Mammary epithelial cell (primary cell): ENCODE measurements at regions of chr3 and their contacts with region 1.

Region 1: GRCh38 chr3:135304378-135304777 is 509.3 kb downstream of the EPHB1 start:
- DNase-seq: no peak
- H3K4me3 ChIP-seq: no peak overlapping the region
- H3K27ac ChIP-seq: no peak overlapping the region
- H3K4me1 ChIP-seq: no peaks in the 10 kb centered on the region
- H3K27me3 ChIP-seq: no peaks in the 10 kb centered on the region
- CTCF ChIP-seq: no peak

Region 2: GRCh38 chr3:135159681-135160247 is 144.6 kb before region 1 on chr3:
- CTCF ChIA-PET with region 1: no interaction called
- dilution Hi-C with region 1: no loop called
- in situ Hi-C with region 1: no loop called
- intact Hi-C with region 1: no loop called
- DNase-seq: no peak
- H3K4me3 ChIP-seq: no peak overlapping the region
- H3K27ac ChIP-seq: no peak overlapping the region
- H3K4me1 ChIP-seq: no peaks in the 10 kb centered on the region
- H3K27me3 ChIP-seq: no peaks in the 10 kb centered on the region
- CTCF ChIP-seq: no peak

Region 3: GRCh38 chr3:135383301-135383700 is 78.9 kb after region 1 on chr3:
- CTCF ChIA-PET with region 1: no interaction called
- dilution Hi-C with region 1: loop called (anchors 5 kb)
- in situ Hi-C with region 1: no loop called
- intact Hi-C with region 1: no loop called
- DNase-seq: no peak
- H3K4me3 ChIP-seq: no peak overlapping the region
- H3K27ac ChIP-seq: no peak overlapping the region
- H3K4me1 ChIP-seq: no peaks in the 10 kb centered on the region
- H3K27me3 ChIP-seq: no peaks in the 10 kb centered on the region
- CTCF ChIP-seq: no peak